Endothelial cell of umbilical vein (primary cell): ENCODE measurements at regions of chr17 and their contacts with region 1.

Region 1: DNA sequence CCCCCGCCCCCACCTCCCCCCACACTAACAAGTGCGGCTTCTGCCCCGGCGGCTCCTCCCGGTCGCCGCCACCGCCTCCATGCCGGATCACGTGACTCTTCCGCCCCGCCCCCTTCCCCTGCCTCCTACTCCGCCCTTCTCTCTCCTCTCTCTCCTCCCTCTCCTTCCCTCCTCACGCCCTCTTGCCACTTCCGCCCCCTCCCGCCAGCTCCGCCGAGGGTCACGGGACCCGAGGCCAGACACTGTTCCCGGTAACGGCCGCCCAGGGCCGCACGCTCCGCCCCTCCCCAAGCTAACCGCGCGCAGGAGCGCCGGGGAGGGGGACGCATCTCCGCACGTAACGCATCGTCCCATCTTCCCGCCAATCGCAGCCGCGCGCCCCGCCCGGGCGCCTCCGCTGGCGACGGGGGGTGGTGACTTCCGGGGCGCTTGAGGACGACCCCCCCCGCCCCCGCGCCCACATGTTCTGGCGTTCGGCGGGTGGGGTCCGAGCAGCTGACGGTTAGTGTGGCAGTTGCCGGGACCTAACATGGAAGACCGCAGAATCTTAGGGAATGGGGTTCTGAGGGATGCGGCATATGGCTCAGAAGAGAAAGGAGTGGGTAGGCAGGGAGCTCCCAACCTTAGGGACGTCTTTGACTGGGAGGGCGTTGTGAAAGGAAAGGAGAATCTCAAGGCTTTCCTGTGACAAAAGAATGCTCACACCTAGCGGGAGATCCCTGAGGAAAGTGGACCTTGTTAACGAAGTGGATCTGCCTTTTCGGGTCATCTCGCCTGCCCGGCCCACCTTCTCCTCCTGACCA is at the start of gene USP32:
- DNase-seq: peak; percentile 97
- H3K4me3 ChIP-seq: peak within 1 kb of the TSS; percentile 59 to 93 (median 88)
- H3K27ac ChIP-seq: peak within 1 kb of the TSS; percentile 82
- H3K4me1 ChIP-seq: peaks cover 22% of the 10 kb centered on the region
- H3K27me3 ChIP-seq: no peaks in the 10 kb centered on the region
- CTCF ChIP-seq: peak in 1 of 2 donors; percentile 20
- POLR2A ChIP-seq: no peak
- total RNA-seq, gene USP32: 48.5 and 52.9 TPM in 2 replicates

Region 2: DNA sequence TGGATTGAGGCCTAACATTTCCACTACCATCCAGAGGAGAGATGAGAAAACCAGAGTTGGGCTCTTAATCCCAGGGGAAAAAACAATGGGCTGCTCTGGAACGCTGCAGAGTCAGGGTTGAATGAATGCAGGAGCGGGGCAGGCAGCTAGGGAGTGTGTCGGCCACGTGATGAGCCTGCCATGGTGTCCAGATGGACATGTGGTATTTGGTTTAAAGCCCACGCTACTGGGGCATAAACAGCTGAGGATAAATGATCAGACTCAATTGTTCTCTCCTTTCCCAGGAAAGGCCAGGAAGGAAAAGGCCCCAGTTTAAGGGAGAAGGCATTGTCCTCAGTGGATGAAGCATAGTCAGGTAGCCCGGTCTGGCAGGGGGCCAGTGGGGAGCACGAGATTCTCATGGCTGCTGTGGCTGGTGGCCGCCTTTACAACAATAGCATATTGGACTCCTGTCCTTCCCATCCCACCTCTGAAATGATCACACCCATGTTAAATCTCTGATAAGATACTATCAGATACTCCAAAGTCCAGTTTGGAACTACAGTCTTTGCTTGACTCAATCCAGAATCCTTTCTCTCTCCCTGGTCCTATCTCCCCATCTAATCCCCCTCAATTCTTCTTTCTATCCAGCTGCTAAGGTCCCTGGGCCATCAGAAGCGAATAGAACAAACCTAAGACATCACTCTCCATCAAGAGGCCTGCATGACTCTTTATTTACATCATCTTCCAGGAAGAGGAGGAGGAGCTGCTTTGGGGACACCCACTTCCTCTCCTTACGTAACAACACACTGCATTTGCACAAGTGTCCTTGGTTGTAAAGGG is 222.1 kb before region 1 on chr17:
- CTCF ChIA-PET with region 1: no interaction called
- POLR2A ChIA-PET with region 1: interaction called, 3 read pairs
- dilution Hi-C with region 1: no loop called
- intact Hi-C with region 1: loop called (anchors 5 kb)
- DNase-seq: peak; percentile 94
- H3K4me3 ChIP-seq: no peak overlapping the region
- H3K27ac ChIP-seq: peak overlapping the region; percentile 48
- H3K4me1 ChIP-seq: peaks cover 20% of the 10 kb centered on the region
- H3K27me3 ChIP-seq: no peaks in the 10 kb centered on the region
- CTCF ChIP-seq: no peak
- POLR2A ChIP-seq: peak; percentile 33

Region 3: GRCh38 chr17:60249290-60249826 is 142.9 kb before region 1 on chr17:
- CTCF ChIA-PET with region 1: no interaction called
- POLR2A ChIA-PET with region 1: no interaction called
- dilution Hi-C with region 1: no loop called
- intact Hi-C with region 1: loop called (anchors 5 kb)
- DNase-seq: peak; percentile 87
- H3K4me3 ChIP-seq: peak overlapping the region in 1 of 3 experiments; percentile 35
- H3K27ac ChIP-seq: peak overlapping the region; percentile 87
- H3K4me1 ChIP-seq: peaks cover 22% of the 10 kb centered on the region
- H3K27me3 ChIP-seq: no peaks in the 10 kb centered on the region
- CTCF ChIP-seq: no peak
- POLR2A ChIP-seq: no peak

Region 4: GRCh38 chr17:60381958-60382357 is 10.3 kb before region 1 on chr17:
- CTCF ChIA-PET with region 1: no interaction called
- POLR2A ChIA-PET with region 1: no interaction called
- dilution Hi-C with region 1: no loop called
- intact Hi-C with region 1: no loop called
- DNase-seq: no peak
- H3K4me3 ChIP-seq: no peak overlapping the region
- H3K27ac ChIP-seq: no peak overlapping the region
- H3K4me1 ChIP-seq: no peaks in the 10 kb centered on the region
- H3K27me3 ChIP-seq: no peaks in the 10 kb centered on the region
- CTCF ChIP-seq: no peak
- POLR2A ChIP-seq: no peak

Region 5: DNA sequence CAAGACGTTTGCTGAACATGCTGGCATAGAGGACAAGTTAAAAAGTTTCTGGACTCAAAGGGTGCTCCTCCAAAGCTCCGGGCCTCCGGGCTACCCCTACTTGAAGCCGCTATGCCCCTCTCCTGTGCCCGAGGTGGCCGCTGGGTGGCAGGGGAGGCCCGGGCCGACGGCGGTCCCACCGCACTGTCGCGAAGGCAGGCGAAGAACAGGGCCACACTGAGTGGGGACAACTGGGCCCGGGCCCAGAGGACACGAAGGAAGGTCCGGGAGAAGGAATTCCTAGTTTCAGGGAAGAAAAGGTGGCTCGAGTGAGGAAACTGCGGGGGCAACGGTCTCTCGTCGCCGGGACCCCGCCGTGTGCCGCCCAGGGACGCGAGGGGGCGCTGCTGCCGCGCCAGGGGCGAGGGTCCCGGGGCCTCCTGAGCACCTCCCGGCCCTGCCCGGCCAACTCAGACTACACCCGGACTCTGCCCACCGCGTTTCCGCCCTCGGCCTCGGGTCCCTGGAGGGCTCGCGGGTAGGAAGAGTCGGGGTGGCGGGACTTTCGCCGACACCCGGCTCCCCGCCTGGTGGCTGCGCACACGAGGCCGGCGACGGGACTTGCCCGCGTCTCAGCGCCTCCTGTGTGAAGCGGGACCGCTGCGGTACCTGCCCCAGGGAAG is 29.2 kb after region 1 on chr17:
- CTCF ChIA-PET with region 1: interaction called, 7 read pairs
- POLR2A ChIA-PET with region 1: no interaction called
- dilution Hi-C with region 1: no loop called
- intact Hi-C with region 1: loop called (anchors 2 kb)
- DNase-seq: peak; percentile 71
- H3K4me3 ChIP-seq: peak overlapping the region; percentile 19 to 61 (median 46)
- H3K27ac ChIP-seq: peak overlapping the region; percentile 47
- H3K4me1 ChIP-seq: peaks cover 3% of the 10 kb centered on the region
- H3K27me3 ChIP-seq: no peaks in the 10 kb centered on the region
- CTCF ChIP-seq: peak; percentile 85 to 99
- POLR2A ChIP-seq: no peak

Region 6: DNA sequence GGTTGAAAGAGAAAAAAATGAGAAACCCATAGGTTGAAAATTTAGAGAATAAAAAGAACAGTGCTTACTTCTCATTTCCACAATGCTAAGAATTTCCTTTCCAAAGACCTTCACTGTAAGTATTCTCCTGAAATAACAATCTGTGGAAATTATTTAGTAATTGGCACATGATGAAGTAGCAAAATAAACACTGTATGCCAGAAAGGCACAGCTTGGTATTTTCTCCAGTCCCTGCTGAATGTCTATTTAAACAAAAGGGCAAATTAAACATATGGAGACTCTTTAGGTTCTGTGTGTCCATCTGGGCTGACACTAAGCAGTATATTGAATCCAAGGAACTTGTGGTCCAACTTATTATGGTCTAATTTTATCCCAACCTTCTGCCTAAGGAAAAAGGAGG is 76.1 kb after region 1 on chr17:
- CTCF ChIA-PET with region 1: no interaction called
- POLR2A ChIA-PET with region 1: no interaction called
- dilution Hi-C with region 1: no loop called
- intact Hi-C with region 1: no loop called
- DNase-seq: peak; percentile 87
- H3K4me3 ChIP-seq: no peak overlapping the region
- H3K27ac ChIP-seq: peak overlapping the region; percentile 67
- H3K4me1 ChIP-seq: peaks cover 28% of the 10 kb centered on the region
- H3K27me3 ChIP-seq: no peaks in the 10 kb centered on the region
- CTCF ChIP-seq: no peak
- POLR2A ChIP-seq: peak; percentile 37